Activated CD8-positive, alpha-beta T cell treated with anti-CD3 and anti-CD28 coated beads, Interleukin-2, amount 10 ng/mL, durations not matched to agents 7 days and 5 days (primary cell): ENCODE measurements at regions of chr10 and their contacts with region 1.

Region 1: GRCh38 chr10:69639291-69640195 is 9.5 kb downstream of the FAM241B start:
- DNase-seq: peak; percentile 81
- ATAC-seq: peak; percentile 66
- H3K4me3 Mint-ChIP-seq: no peak overlapping the region
- H3K27ac Mint-ChIP-seq: no peak overlapping the region
- H3K4me1 Mint-ChIP-seq: no peaks in the 10 kb centered on the region
- H3K27me3 Mint-ChIP-seq: peaks cover 4% of the 10 kb centered on the region

Region 2: DNA sequence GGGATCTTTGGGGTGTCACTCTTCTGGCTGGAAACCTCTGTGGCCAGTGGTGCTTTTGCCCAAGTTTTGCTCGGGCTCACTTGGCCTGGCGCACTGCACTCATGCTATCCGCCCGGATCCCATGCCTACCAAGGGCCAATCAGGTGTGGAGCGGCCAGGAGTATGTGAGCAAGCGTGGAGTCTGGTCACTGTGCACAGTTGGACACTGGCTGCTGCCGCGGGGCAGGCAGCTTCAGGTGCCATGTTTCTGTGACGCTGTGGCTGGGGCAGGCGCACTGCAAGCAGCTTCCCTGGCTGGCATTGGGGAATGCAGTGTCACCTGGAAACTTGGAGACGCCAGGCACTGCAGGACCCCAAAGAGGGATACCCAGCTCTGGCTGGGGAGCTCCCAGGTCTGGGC is 111.6 kb before region 1 on chr10:
- CTCF ChIA-PET with region 1: interaction called, 13 read pairs
- POLR2A ChIA-PET with region 1: no interaction called
- DNase-seq: no peak
- ATAC-seq: no peak
- H3K4me3 Mint-ChIP-seq: no peak overlapping the region
- H3K27ac Mint-ChIP-seq: no peak overlapping the region
- H3K4me1 Mint-ChIP-seq: no peaks in the 10 kb centered on the region
- H3K27me3 Mint-ChIP-seq: peaks cover 21% of the 10 kb centered on the region

Region 3: GRCh38 chr10:69649786-69650555 is 10.4 kb after region 1 on chr10:
- CTCF ChIA-PET with region 1: interaction called, 11 read pairs
- POLR2A ChIA-PET with region 1: interaction called, 3 read pairs
- DNase-seq: no peak
- ATAC-seq: no peak
- H3K4me3 Mint-ChIP-seq: no peak overlapping the region
- H3K27ac Mint-ChIP-seq: peak overlapping the region; percentile 74
- H3K4me1 Mint-ChIP-seq: peaks cover 33% of the 10 kb centered on the region
- H3K27me3 Mint-ChIP-seq: no peaks in the 10 kb centered on the region

Region 4: GRCh38 chr10:69731184-69731583 is 91.6 kb after region 1 on chr10:
- CTCF ChIA-PET with region 1: no interaction called
- POLR2A ChIA-PET with region 1: no interaction called
- DNase-seq: no peak
- ATAC-seq: no peak
- H3K4me3 Mint-ChIP-seq: no peak overlapping the region
- H3K27ac Mint-ChIP-seq: no peak overlapping the region
- H3K4me1 Mint-ChIP-seq: peaks cover 30% of the 10 kb centered on the region
- H3K27me3 Mint-ChIP-seq: peaks cover 10% of the 10 kb centered on the region

Region 5: GRCh38 chr10:69786791-69787190 is 147.2 kb after region 1 on chr10:
- CTCF ChIA-PET with region 1: no interaction called
- POLR2A ChIA-PET with region 1: no interaction called
- DNase-seq: no peak
- ATAC-seq: no peak
- H3K4me3 Mint-ChIP-seq: no peak overlapping the region
- H3K27ac Mint-ChIP-seq: no peak overlapping the region
- H3K4me1 Mint-ChIP-seq: peaks cover 2% of the 10 kb centered on the region
- H3K27me3 Mint-ChIP-seq: peaks cover 16% of the 10 kb centered on the region

Region 6: GRCh38 chr10:69885379-69886013 is 246.0 kb after region 1 on chr10:
- CTCF ChIA-PET with region 1: no interaction called
- POLR2A ChIA-PET with region 1: no interaction called
- DNase-seq: no peak
- ATAC-seq: no peak
- H3K4me3 Mint-ChIP-seq: no peak overlapping the region
- H3K27ac Mint-ChIP-seq: no peak overlapping the region
- H3K4me1 Mint-ChIP-seq: no peaks in the 10 kb centered on the region
- H3K27me3 Mint-ChIP-seq: peaks cover 3% of the 10 kb centered on the region

Region 7: GRCh38 chr10:70950037-70950436 is 1310.5 kb after region 1 on chr10:
- CTCF ChIA-PET with region 1: no interaction called
- POLR2A ChIA-PET with region 1: no interaction called
- DNase-seq: no peak
- ATAC-seq: no peak
- H3K4me3 Mint-ChIP-seq: no peak overlapping the region
- H3K27ac Mint-ChIP-seq: no peak overlapping the region
- H3K4me1 Mint-ChIP-seq: no peaks in the 10 kb centered on the region
- H3K27me3 Mint-ChIP-seq: no peaks in the 10 kb centered on the region